Esophagus squamous epithelium (tissue), 5 donors: ENCODE measurements at regions of chr6 and their contacts with region 1.

Region 1: GRCh38 chr6:134174672-134175198 is 122.3 kb upstream of the SLC2A12 start:
- DNase-seq: peak; percentile 55
- H3K4me3 ChIP-seq: peak overlapping the region; percentile 78 to 82 (median 79)
- H3K27ac ChIP-seq: peak overlapping the region; percentile 97 to 99 (median 98)
- H3K4me1 ChIP-seq: peaks cover 24 to 74% (median 35%) of the 10 kb centered on the region in 3 donors
- H3K27me3 ChIP-seq: no peaks in the 10 kb centered on the region
- CTCF ChIP-seq: peak in 4 of 6 experiments; percentile 3 to 16 (median 5)
- POLR2A ChIP-seq: peak in 3 of 4 donors; percentile 67 to 97 (median 97)

Region 2: DNA sequence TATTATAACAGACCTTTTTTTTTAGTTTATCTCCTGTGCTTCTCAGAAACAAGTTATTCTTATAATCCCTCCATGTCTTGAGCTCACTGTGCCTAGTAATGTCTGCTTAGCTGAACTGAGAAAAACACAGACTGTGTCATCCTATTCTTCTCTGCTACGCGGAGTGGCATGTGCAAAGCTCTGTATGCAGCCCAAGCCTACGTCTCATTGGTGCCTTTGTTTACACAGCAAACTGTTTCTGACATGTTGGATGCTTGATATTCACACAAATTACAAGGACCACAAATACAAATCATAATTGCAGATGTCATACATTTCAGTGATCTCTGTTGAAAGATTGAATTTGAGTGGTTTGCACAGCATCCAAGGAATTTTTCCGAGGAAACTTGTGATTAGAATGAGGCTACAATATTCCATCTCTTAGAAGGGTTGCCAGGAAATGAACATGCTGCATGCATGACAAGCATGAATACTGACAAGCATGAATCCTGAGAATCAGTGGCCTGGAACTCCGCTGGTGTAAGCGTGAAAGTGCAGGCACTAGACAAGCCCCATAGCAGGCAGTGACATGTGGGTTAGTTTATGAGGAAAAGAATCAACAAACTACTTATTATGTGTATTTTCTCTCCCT is 271.6 kb after region 1 on chr6:
- intact Hi-C with region 1: loop called (anchors 5 kb)
- DNase-seq: no peak
- H3K4me3 ChIP-seq: no peak overlapping the region
- H3K27ac ChIP-seq: peak overlapping the region; percentile 38 to 72 (median 56)
- H3K4me1 ChIP-seq: peaks cover 13 to 73% (median 17%) of the 10 kb centered on the region in 3 donors
- H3K27me3 ChIP-seq: no peaks in the 10 kb centered on the region
- CTCF ChIP-seq: peak in 2 of 6 experiments; percentile 20 to 37
- POLR2A ChIP-seq: no peak

Region 3: DNA sequence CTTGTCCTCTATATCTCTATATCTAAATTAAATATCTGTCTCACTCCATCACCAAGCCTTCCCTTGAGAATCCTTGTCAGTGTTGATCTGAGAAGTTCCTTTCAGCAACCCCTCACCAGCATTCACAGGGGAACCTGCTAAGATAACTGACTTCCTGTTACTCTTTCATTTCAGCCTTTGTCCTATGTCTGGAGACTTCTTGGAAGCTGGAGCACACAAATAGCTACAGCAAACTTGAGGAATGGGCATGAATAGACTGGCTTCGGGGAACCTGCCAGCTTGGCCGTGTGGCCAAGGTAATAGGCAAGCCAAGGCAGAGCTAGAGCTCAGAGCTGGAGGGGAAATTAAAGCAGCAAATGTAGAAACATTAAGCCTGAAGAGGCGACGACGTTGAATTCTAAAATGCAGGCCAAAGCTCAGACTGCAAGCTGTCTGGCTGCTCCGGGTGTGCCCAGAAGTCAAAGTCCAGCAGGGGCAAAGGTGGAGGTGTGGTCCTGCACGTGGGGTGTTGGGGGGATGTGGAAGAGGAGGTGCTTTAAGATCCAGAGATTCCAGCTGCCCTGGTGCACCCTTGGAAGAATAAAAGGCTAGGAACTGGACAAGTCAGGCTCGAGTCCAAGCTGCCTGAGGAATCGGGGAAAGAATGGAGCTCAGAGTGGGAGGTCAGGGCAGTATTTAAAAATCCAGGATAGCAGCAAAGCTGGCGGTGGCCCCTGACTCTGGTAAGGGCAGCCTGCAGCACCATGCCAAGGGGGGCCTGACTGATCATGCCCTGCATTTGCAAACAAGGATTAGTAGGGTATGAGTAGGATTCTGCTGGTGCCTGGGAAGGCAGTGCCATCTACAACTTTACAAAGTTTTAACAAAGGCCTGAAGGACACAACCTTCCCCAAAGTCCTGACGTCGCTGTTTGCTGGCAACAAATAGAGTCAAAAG is 328.1 kb after region 1 on chr6:
- intact Hi-C with region 1: loop called (anchors 10 kb)
- DNase-seq: no peak
- H3K4me3 ChIP-seq: peak overlapping the region in 1 of 4 donors; percentile 17
- H3K27ac ChIP-seq: peak overlapping the region; percentile 81 to 84 (median 83)
- H3K4me1 ChIP-seq: peaks cover 4 to 49% (median 5%) of the 10 kb centered on the region in 3 donors
- H3K27me3 ChIP-seq: no peaks in the 10 kb centered on the region
- CTCF ChIP-seq: no peak
- POLR2A ChIP-seq: no peak

Region 4: GRCh38 chr6:134640975-134641429 is 466.3 kb after region 1 on chr6:
- intact Hi-C with region 1: loop called (anchors 5 kb)
- DNase-seq: peak; percentile 16
- H3K4me3 ChIP-seq: no peak overlapping the region
- H3K27ac ChIP-seq: peak overlapping the region; percentile 34 to 65 (median 48)
- H3K4me1 ChIP-seq: peaks cover 10 to 53% (median 14%) of the 10 kb centered on the region in 3 donors
- H3K27me3 ChIP-seq: no peaks in the 10 kb centered on the region
- CTCF ChIP-seq: peak; percentile 69 to 99 (median 96)
- POLR2A ChIP-seq: no peak

Region 5: GRCh38 chr6:134822920-134823709 is 648.4 kb after region 1 on chr6:
- intact Hi-C with region 1: loop called (anchors 5 kb)
- DNase-seq: no peak
- H3K4me3 ChIP-seq: no peak overlapping the region
- H3K27ac ChIP-seq: no peak overlapping the region
- H3K4me1 ChIP-seq: peaks cover 6 to 44% (median 19%) of the 10 kb centered on the region in 3 donors
- H3K27me3 ChIP-seq: no peaks in the 10 kb centered on the region
- CTCF ChIP-seq: peak; percentile 34 to 95 (median 82)
- POLR2A ChIP-seq: no peak

Region 6: DNA sequence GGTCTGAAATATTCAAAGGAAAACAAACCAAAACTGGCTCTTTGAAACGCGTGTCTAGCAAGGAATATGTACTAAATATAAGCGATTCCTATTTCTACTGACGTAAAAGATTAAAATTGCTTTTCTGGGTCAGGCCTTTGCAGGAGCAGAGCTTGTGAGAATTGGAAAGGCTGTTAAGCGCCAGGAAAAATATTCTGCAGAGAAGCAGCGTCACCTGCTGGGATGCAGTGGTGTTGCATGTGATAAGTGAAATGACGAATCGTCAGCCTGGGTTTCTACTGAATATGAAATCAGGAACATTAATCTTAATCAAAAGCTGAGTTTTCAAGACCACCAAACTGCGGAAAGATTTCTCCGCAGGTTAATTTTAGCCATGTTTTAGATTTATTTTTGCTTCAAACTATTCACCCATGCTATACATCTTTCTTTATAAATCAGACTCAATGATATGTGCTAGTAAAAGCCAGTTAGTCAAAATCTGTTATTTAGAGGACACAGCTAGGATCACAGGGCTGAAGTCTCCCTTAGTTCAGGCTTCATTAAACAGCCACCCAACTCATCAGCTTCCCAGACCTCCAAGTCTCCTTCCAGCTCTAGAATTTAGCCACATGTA is 707.8 kb after region 1 on chr6:
- intact Hi-C with region 1: loop called (anchors 5 kb)
- DNase-seq: no peak
- H3K4me3 ChIP-seq: no peak overlapping the region
- H3K27ac ChIP-seq: no peak overlapping the region
- H3K4me1 ChIP-seq: peaks cover 0 to 8% (median 0%) of the 10 kb centered on the region in 3 donors
- H3K27me3 ChIP-seq: peaks cover 0 to 19% (median 0%) of the 10 kb centered on the region in 4 donors
- CTCF ChIP-seq: peak; percentile 54 to 98 (median 92)
- POLR2A ChIP-seq: no peak